OCI-LY7 (cell line): ENCODE measurements at regions of chr15 and their contacts with region 1.

Region 1: DNA sequence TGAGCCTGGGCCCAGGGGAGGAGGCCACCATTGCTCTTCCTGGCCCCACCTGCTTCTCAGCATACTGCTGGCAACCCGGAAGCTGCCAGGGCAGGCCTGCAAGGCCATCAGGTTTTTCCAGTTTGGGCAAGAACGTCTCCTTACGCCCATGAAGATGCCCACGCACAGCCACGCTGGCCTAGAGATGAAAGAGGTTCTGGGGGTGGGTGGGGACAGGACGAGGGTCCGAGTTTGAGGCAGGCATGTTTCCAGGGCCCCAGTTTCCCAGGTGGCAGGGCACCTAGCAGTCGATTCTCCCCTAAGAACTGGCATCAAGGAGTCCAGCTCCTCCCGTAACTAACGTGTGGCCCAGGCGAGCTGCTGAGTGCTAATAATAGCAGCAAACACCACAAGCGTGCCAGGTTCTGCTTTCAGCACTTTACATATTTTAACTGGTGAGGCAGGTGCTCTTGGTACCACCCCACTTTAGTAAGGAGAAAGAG is 45.8 kb downstream of the ZNF710 start:
- DNase-seq: peak; percentile 85
- H3K4me3 ChIP-seq: peak overlapping the region; percentile 50
- H3K27ac ChIP-seq: peak overlapping the region; percentile 77
- H3K4me1 ChIP-seq: peaks cover 40% of the 10 kb centered on the region
- CTCF ChIP-seq: no peak

Region 2: GRCh38 chr15:90059208-90059985 is 12.4 kb after region 1 on chr15:
- CTCF ChIA-PET with region 1: interaction called, 3 read pairs
- POLR2A ChIA-PET with region 1: interaction called, 8 read pairs
- intact Hi-C with region 1: loop called (anchors 1 kb)
- DNase-seq: peak; percentile 95
- H3K4me3 ChIP-seq: peak overlapping the region; percentile 33
- H3K27ac ChIP-seq: peak overlapping the region; percentile 83
- H3K4me1 ChIP-seq: peaks cover 66% of the 10 kb centered on the region
- CTCF ChIP-seq: no peak